ENCODE measurements at regions of chr16 and their contacts with region 1.

Region 1: DNA sequence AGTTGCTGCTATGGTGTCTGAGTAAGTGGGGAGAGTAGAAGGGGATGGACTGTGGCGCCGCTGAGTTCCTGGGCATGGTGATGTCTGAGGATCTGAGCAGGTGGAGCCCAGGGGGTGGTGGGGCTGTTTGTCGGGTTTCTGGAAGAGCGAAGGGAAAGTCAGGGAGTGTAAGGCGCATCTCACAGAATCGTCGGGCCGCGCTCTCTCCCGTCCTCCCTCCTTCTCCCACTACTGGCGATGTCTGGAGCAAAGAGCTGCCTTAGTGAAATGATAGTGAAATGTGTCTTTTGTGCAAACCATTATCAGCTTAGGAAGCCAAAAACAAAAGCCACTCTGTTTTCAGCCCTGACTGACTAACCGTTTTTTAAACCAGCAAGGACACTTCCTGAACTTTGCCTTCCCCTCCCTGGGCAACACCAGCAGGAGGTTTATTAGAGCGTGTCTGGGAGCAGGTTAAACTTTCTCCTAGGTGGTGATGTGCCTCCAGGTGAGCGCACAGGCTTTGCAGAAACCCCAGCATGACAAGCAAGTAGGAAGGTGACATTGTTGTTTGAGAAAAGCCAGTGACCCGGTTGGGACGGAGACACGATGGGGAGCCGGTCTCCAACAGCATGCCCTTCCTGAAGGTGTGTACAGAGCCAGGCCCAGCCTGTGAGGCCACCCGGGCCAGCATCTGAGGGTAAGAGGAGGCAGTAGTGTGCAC is 49.1 kb downstream of the RAB11FIP3 start:
- DNase-seq: peak; percentile 55
- H3K4me3 ChIP-seq: peak overlapping the region in 1 of 4 donors; percentile 5
- H3K27ac ChIP-seq: peak overlapping the region in 3 of 4 donors; percentile 2 to 61 (median 41)
- H3K4me1 ChIP-seq: peaks cover 0 to 8% (median 5%) of the 10 kb centered on the region in 4 donors
- H3K27me3 ChIP-seq: no peaks in the 10 kb centered on the region
- CTCF ChIP-seq: no peak
- EP300 ChIP-seq: no peak
- POLR2A ChIP-seq: no peak

Region 2: DNA sequence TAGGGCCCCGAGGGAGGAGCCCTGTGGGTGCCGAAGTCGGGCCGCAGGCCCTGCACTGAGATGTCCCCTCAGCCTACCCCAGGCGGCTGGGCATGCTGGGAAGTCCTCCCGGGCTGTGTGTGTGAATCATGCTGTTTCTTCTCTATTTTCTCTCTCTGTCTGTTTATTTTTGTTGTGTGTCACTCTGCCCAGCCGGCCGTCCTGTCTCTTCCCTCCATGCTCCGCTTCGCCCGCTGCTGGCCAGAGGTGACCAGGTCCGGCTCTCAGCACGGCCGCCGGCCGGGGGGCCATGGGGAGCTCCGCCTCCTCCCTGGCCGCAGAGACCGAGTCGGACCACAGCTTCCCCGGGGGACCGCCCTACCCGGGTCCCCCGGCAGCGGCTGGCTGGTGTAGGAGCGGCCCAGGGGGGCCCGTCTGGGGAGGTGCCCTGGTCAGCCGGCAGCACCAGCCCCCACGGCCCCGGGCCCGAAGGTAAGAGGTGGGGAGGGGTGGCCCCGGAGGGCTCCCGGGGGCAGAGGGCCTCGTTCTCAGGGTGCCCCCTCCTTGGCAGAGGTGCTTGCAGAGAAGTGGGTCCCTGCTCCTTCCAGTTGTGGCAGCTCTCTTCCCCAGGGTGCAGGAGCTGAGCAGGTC is 65.4 kb after region 1 on chr16:
- in situ Hi-C with region 1: no loop called
- intact Hi-C with region 1: loop called (anchors 1 kb)
- DNase-seq: no peak
- H3K4me3 ChIP-seq: no peak overlapping the region
- H3K27ac ChIP-seq: no peak overlapping the region
- H3K4me1 ChIP-seq: peaks cover 0 to 12% (median 7%) of the 10 kb centered on the region in 4 donors
- H3K27me3 ChIP-seq: no peaks in the 10 kb centered on the region
- CTCF ChIP-seq: no peak
- EP300 ChIP-seq: no peak
- POLR2A ChIP-seq: no peak